Posterior cingulate gyrus (tissue), 11 donors: ENCODE measurements at regions of chr22 and their contacts with region 1.

Region 1: GRCh38 chr22:24555157-24556039 is at the start of gene SNRPD3:
- DNase-seq: peak; percentile 98 to 100 (median 99)

Region 2: GRCh38 chr22:24270638-24271408 is 284.6 kb before region 1 on chr22 and contains the start of gene SPECC1L:
- intact Hi-C with region 1: loop called (anchors 2 kb)
- DNase-seq: peak; percentile 83 to 98 (median 87)

Region 3: DNA sequence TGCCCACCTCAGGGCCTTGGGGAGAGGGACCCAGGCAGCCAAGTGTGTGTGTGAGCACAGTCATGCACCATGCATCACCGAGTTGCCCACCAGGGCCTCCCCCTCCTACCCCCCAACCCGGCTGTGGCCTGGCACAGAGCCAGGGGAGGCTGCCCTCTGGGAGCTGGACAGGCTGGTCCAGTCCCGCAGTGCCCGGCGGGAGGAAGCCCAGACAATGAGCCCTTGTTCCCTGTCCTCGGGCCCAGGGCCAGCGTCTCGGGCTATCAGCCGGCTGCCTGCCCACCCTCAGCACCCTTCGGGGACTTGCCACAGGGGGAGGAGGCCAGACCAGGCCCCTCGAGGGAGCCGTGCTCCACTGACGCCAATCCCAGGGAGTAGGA is 33.0 kb after region 1 on chr22:
- intact Hi-C with region 1: loop called (anchors 1 kb)
- DNase-seq: peak; percentile 82 to 98 (median 92)